Activated CD4-positive, alpha-beta T cell treated with anti-CD3 and anti-CD28 coated beads, Interleukin-2, amount 10 ng/mL, durations not matched to agents 24 days and 14 days (primary cell): ENCODE measurements at regions of chr12 and their contacts with region 1.

Region 1: GRCh38 chr12:106223485-106224354 is 24.1 kb downstream of the CKAP4 start:
- DNase-seq: peak; percentile 93
- H3K4me3 Mint-ChIP-seq: no peak overlapping the region
- H3K27ac Mint-ChIP-seq: no peak overlapping the region
- H3K4me1 Mint-ChIP-seq: peaks cover 20% of the 10 kb centered on the region
- H3K27me3 Mint-ChIP-seq: peaks cover 11% of the 10 kb centered on the region

Region 2: GRCh38 chr12:105420659-105421240 is 803.0 kb before region 1 on chr12:
- intact Hi-C with region 1: loop called (anchors 1 kb)
- DNase-seq: peak; percentile 88
- H3K4me3 Mint-ChIP-seq: no peak overlapping the region
- H3K27ac Mint-ChIP-seq: no peak overlapping the region
- H3K4me1 Mint-ChIP-seq: no peaks in the 10 kb centered on the region
- H3K27me3 Mint-ChIP-seq: peaks cover 8% of the 10 kb centered on the region

Region 3: GRCh38 chr12:106282457-106283097 is 58.9 kb after region 1 on chr12:
- intact Hi-C with region 1: loop called (anchors 1 kb)
- DNase-seq: peak; percentile 84
- H3K4me3 Mint-ChIP-seq: no peak overlapping the region
- H3K27ac Mint-ChIP-seq: no peak overlapping the region
- H3K4me1 Mint-ChIP-seq: peaks cover 11% of the 10 kb centered on the region
- H3K27me3 Mint-ChIP-seq: peaks cover 18% of the 10 kb centered on the region